Activated T-helper 2 cell treated with anti-CD3 and anti-CD28 coated beads, Interferon-gamma antibody, Interleukin-2, Interleukin-4, amounts not matched to agents 10 μg/mL and 5 μg/mL and 100 μg/mL, durations not matched to agents 14 hours and 24 hours and 36 hours (primary cell): ENCODE measurements at regions of chr3 and their contacts with region 1.

Region 1: DNA sequence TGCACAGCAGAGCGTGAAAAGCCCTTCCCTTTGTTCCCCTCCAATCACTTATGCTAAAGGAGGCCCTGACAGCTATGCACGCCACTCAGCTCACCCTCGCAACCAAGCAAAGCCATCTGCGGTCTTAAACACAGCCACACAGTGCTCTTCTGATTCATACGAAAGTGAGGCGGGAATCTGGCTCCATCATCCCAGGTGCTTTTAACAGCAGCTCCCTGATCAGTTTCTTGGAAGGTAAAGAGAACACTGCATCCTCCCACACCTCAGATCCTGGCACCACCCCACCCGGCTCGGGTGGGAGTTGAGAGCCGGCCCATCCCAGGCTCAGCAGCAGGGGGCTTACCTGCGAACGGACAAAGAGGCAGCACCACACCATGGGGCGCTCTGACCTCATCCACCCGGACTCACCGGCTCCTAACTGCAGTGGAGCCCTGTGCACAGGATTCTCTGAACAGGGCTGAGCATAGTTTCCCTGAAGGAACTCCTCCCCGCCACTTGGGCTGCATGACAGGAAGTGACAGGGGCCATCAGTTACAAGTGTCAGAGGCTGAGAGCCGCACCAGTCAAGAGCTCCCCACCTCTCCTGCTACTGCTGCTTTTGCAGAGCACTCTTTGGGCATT is 114.3 kb upstream of the ARHGEF3 start:
- DNase-seq: peak; percentile 72
- H3K4me3 Mint-ChIP-seq: peak overlapping the region; percentile 87
- H3K27ac Mint-ChIP-seq: peak overlapping the region; percentile 88
- H3K4me1 Mint-ChIP-seq: peaks cover 63% of the 10 kb centered on the region
- H3K27me3 Mint-ChIP-seq: no peaks in the 10 kb centered on the region

Region 2: GRCh38 chr3:56753206-56753820 is 162.8 kb before region 1 on chr3:
- intact Hi-C with region 1: loop called (anchors 2 kb)
- DNase-seq: peak; percentile 29
- H3K4me3 Mint-ChIP-seq: no peak overlapping the region
- H3K27ac Mint-ChIP-seq: peak overlapping the region; percentile 40
- H3K4me1 Mint-ChIP-seq: peaks cover 57% of the 10 kb centered on the region
- H3K27me3 Mint-ChIP-seq: no peaks in the 10 kb centered on the region

Region 3: DNA sequence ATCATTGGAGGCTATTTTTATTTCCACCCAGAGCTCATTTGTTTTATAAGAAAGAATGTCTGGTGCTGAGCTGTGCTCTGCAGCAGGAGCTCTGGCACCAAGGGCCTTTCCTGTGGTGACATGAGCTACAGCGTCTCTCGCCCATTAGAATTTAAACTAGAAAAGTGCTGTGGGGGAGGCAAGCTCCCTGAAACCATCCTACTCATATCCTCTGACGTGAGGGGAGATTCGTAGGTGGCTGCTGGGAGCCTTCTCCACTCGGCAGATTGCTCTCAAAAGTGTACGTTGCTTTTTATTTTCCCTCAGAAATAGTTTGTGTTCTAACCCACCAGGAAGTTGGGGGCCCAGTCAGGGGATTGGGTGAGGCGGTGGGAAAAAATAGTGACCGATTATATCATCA is 38.0 kb before region 1 on chr3:
- intact Hi-C with region 1: loop called (anchors 2 kb)
- DNase-seq: peak; percentile 22
- H3K4me3 Mint-ChIP-seq: peak overlapping the region; percentile 40
- H3K27ac Mint-ChIP-seq: peak overlapping the region; percentile 94
- H3K4me1 Mint-ChIP-seq: peaks cover 80% of the 10 kb centered on the region
- H3K27me3 Mint-ChIP-seq: no peaks in the 10 kb centered on the region

Region 4: DNA sequence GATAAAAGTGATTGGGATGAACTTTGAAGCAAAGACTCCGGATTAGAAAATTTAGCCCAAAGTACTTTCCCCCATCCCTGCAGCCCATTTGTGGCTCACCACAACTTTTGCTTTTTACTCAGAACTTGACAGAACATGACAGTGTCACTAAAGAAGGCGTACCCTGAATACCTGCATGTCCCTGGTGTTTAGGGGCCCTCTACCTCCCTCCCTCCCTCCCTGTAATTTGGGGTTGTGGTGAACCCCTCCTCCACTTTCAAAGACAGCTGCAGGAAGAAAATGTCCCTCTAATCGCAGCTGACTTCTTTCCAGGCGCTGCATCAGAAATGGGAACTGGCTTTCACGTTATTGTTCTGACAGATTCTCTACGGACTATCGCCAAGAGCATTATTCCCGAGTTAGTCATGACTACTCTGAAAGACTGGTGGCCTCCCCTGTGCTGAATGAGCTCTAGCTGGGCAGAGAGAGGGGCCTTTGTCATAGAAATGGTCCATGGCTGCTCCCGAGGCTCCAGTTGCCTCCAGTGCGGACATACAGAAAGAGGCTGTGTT is 21.1 kb before region 1 on chr3:
- intact Hi-C with region 1: loop called (anchors 1 kb)
- DNase-seq: no peak
- H3K4me3 Mint-ChIP-seq: peak overlapping the region; percentile 13
- H3K27ac Mint-ChIP-seq: no peak overlapping the region
- H3K4me1 Mint-ChIP-seq: peaks cover 47% of the 10 kb centered on the region
- H3K27me3 Mint-ChIP-seq: no peaks in the 10 kb centered on the region

Region 5: GRCh38 chr3:56980798-56981390 is 64.8 kb after region 1 on chr3:
- intact Hi-C with region 1: loop called (anchors 1 kb)
- DNase-seq: peak; percentile 22
- H3K4me3 Mint-ChIP-seq: no peak overlapping the region
- H3K27ac Mint-ChIP-seq: peak overlapping the region; percentile 72
- H3K4me1 Mint-ChIP-seq: peaks cover 26% of the 10 kb centered on the region
- H3K27me3 Mint-ChIP-seq: no peaks in the 10 kb centered on the region